PC-9 (cell line): ENCODE measurements at regions of chr6 and their contacts with region 1.

Region 1: GRCh38 chr6:54156650-54157250 is 45.5 kb downstream of the MLIP start:
- DNase-seq: no peak
- H3K4me3 ChIP-seq: no peak overlapping the region
- H3K27ac ChIP-seq: no peak overlapping the region
- H3K4me1 ChIP-seq: no peaks in the 10 kb centered on the region
- H3K27me3 ChIP-seq: no peaks in the 10 kb centered on the region
- CTCF ChIP-seq: no peak

Region 2: GRCh38 chr6:54114991-54115390 is 41.8 kb before region 1 on chr6:
- CTCF ChIA-PET with region 1: no interaction called
- POLR2A ChIA-PET with region 1: no interaction called
- intact Hi-C with region 1: loop called (anchors 1 kb)
- DNase-seq: no peak
- H3K4me3 ChIP-seq: no peak overlapping the region
- H3K27ac ChIP-seq: no peak overlapping the region
- H3K4me1 ChIP-seq: no peaks in the 10 kb centered on the region
- H3K27me3 ChIP-seq: no peaks in the 10 kb centered on the region
- CTCF ChIP-seq: no peak

Region 3: DNA sequence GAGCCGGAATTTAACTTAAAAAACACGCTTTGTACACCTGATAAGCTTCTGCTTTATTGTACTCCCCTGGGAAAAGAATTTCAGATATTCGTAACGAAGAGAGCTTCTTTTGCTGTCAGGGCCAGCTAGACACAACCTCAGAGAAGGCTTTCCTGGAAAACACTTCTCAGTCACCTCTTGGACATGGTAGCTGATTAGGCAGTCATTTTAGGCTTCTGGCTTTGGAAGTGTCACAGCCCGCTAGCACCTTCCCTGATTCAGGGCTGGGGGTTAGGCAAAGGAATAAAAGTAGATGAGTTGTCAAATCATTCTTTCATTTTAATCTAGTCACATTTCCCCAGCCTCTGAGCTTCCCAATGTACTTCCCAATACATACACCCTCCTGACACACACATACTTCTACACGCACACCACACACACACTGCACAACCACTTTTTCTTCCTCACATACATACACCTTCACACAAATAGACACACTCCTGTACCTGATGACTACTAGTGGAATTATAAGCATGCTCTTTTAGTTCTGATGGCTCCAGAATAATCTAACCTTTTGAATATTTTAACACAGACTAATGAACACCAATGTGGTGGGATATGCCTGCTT is 116.6 kb after region 1 on chr6:
- CTCF ChIA-PET with region 1: no interaction called
- POLR2A ChIA-PET with region 1: no interaction called
- intact Hi-C with region 1: no loop called
- DNase-seq: no peak
- H3K4me3 ChIP-seq: no peak overlapping the region
- H3K27ac ChIP-seq: no peak overlapping the region
- H3K4me1 ChIP-seq: no peaks in the 10 kb centered on the region
- H3K27me3 ChIP-seq: no peaks in the 10 kb centered on the region
- CTCF ChIP-seq: no peak